Posterior vena cava (tissue), 2 donors: ENCODE measurements at regions of chr18 and their contacts with region 1.

Region 1: GRCh38 chr18:76875390-76876325 is 53.3 kb downstream of the ZNF236 start:
- DNase-seq: no peak

Region 2: GRCh38 chr18:76643996-76644395 is 231.7 kb before region 1 on chr18:
- intact Hi-C with region 1: no loop called
- DNase-seq: no peak

Region 3: DNA sequence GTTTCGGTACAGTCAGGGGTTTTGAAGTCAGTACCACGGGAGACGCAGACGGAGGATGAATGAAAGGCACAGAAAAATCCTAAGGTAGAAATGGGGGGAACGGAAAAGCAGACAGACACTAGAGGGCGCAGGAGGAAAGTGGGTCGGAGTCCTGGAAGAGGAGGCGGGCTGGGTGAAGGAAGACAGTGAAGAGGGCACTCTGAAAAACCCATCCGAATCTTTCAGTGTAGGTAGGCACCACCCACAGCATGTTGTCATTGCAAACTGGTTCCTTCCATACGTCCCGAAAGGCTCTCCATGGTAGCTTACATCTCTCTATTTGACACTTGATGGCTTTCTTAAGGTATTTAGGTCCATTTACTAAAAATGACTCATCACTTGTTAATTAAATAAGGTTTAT is 71.8 kb before region 1 on chr18:
- intact Hi-C with region 1: loop called in 1 of 2 experiments (anchors 10 kb)
- DNase-seq: peak; percentile 50